BJ (cell line): ENCODE measurements at regions of chr5 and their contacts with region 1.

Region 1: GRCh38 chr5:10760096-10760915 is 728 bp downstream of the DAP start:
- DNase-seq: no peak
- H3K4me3 ChIP-seq: peak overlapping the region; percentile 57
- H3K27me3 ChIP-seq: no peaks in the 10 kb centered on the region
- CTCF ChIP-seq: no peak

Region 2: DNA sequence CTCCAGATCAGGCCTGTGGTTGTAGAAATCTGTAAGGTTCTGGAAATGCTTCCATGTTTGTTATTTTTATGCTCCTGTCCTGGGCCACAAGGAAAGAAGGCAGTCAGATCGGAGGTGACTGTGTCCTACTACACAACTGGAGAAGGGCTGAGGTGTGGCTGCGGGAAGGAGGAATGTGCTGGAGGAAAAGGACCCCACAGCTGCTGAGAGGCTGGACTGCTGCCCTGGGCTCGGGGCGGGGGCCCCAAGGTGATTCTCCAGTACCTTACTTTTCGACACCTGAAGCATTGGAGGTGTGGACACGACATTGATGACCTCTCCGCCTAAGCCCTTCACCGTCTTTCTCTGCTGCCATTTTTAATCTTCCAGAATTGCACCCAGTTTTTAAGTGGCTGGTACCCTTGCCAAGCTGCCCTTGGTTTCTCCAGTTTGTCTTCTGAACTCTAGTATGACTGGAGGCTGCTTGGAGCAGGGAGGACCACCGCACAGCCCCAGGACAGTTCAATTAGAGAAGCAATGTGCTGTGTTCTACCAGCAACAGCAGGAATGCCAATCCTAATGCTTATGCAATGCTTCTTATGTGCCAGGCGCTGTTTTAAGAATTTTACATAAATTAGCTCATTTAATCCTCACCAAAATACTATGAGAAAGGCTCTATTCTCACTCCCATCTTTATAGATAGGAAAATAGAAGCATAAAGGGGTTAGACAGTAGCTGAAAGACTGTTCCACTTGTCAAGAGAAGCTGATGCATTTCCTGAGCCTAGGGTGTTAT is 209.9 kb before region 1 on chr5:
- CTCF ChIA-PET with region 1: no interaction called
- POLR2A ChIA-PET with region 1: interaction called, 12 read pairs
- DNase-seq: no peak
- H3K4me3 ChIP-seq: no peak overlapping the region
- H3K27me3 ChIP-seq: peaks cover 2% of the 10 kb centered on the region; the same call in 1 of the 2 replicates
- CTCF ChIP-seq: no peak